Left cardiac atrium (tissue), 4 donors: ENCODE measurements at regions of chr18 and their contacts with region 1.

Region 1: DNA sequence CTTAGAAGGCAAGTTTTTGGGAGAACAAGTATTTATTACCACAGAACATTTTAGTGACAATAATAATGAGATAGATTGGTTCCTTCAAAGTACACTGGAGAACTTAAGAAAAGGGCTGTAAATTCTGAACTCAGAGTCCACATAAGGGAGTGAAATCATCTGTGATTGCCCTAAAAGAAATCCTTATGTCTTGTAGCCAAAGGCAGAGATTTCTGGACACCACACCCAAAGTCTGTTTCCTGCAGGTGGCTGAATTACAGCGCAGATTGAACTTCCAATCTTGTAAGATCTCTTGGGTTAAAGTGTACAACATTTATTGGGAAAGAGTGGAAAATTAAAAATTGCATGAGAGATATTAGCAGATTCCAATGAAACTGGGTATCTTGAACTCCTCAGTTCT is 143.8 kb downstream of the TAF4B start:
- DNase-seq: no peak
- ATAC-seq: no peak

Region 2: DNA sequence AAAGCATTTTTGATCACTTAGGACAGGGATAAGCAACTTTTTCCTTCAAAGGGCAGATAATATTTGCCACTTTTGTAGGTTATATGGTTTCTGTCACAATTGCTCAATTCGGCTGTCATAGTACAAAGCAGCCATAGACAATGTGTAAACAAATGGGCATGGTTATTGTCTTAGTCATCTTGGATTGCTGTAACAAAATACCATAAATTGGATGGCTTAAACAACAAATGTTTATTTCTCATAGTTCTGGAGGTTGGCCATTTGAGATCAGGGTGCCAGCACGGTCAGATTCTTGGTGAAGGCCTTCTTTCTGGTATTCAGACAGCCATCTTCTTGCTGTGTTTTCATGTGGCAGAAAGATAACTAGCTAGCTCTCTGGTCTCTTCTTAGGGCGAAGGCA is 52.6 kb before region 1 on chr18:
- intact Hi-C with region 1: loop called in 1 of 2 experiments (anchors 10 kb)
- DNase-seq: no peak
- ATAC-seq: no peak

Region 3: GRCh38 chr18:26548429-26549262 is 178.6 kb after region 1 on chr18 and contains the start of gene KCTD1:
- intact Hi-C with region 1: no loop called
- DNase-seq: peak; percentile 89
- ATAC-seq: peak; percentile 58 to 69
- total RNA-seq, gene KCTD1: 35.6 to 42.2 TPM